CD4-positive, alpha-beta memory T cell (primary cell): ENCODE measurements at regions of chr17 and their contacts with region 1.

Region 1: DNA sequence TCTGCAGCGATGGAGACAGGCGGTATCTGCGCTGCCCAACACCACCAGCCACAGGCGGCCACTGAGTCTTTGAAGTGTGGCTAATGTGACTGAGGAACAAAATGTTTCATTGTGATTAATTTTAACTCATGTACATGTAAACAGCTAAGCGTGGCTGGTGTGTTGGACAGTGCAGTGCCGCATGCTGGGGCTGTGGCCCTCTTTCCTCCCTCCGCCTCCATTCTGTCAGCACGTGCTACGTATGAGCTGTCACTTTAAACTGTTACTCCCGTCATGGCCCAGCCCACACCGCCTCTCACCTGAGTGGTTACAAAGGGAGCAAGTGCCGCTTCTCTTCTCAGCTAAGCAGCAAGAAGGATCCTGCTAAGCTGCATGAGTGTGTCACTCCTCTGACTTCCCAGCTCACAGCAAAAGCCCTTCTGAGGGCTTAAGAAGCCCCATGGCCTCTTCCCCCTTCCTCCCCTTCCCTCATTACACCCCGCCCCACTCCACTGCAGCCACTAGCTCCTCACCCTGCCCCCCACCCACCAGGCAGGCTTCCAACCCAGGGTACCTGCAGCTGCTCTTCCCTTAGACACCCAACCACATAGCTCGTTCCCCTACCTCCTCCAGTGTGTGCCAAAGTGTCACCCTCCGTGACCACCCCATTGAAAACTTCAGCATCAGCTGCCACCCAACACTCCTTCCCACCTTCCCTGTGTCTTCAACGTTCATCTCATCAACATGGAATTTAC is 15.0 kb downstream of the HASPIN start:
- DNase-seq: peak; percentile 45 to 71 (median 52)
- H3K4me3 ChIP-seq: no peak overlapping the region
- H3K4me3 Mint-ChIP-seq: peak overlapping the region; percentile 21 to 70 (median 58)
- H3K27ac ChIP-seq: no peak overlapping the region
- H3K27ac Mint-ChIP-seq: peak overlapping the region; percentile 67 to 88 (median 81)
- H3K4me1 ChIP-seq: peaks cover 39% of the 10 kb centered on the region
- H3K4me1 Mint-ChIP-seq: peaks cover 21 to 39% (median 30%) of the 10 kb centered on the region in 4 donors
- H3K27me3 ChIP-seq: no peaks in the 10 kb centered on the region
- H3K27me3 Mint-ChIP-seq: no peaks in the 10 kb centered on the region

Region 2: GRCh38 chr17:3668279-3669085 is 70.2 kb before region 1 on chr17 and contains the starts of genes EMC6 and TAX1BP3:
- CTCF ChIA-PET with region 1: no interaction called
- POLR2A ChIA-PET with region 1: no interaction called
- intact Hi-C with region 1: no loop called
- DNase-seq: peak; percentile 97 to 100 (median 99)
- H3K4me3 ChIP-seq: peak within 1 kb of the TSS; percentile 76 to 83
- H3K4me3 Mint-ChIP-seq: peak within 1 kb of the TSS; percentile 88 to 96 (median 92)
- H3K27ac ChIP-seq: peak within 1 kb of the TSS; percentile 80
- H3K27ac Mint-ChIP-seq: peak within 1 kb of the TSS; percentile 84 to 95 (median 90)
- H3K4me1 ChIP-seq: peaks cover 23% of the 10 kb centered on the region
- H3K4me1 Mint-ChIP-seq: peaks cover 18 to 30% (median 19%) of the 10 kb centered on the region in 4 donors
- H3K27me3 ChIP-seq: no peaks in the 10 kb centered on the region
- H3K27me3 Mint-ChIP-seq: no peaks in the 10 kb centered on the region
- total RNA-seq, gene EMC6: 27.8 to 29.4 TPM
- total RNA-seq, gene TAX1BP3: 12.7 to 13.2 TPM

Region 3: GRCh38 chr17:3683054-3683511 is 55.6 kb before region 1 on chr17:
- CTCF ChIA-PET with region 1: interaction called, 6 read pairs
- POLR2A ChIA-PET with region 1: interaction called, 3 read pairs
- intact Hi-C with region 1: loop called (anchors 2 kb)
- DNase-seq: peak in 4 of 5 donors; percentile 55 to 62 (median 58)
- H3K4me3 ChIP-seq: no peak overlapping the region
- H3K4me3 Mint-ChIP-seq: peak overlapping the region in 1 of 8 donors; percentile 21
- H3K27ac ChIP-seq: no peak overlapping the region
- H3K27ac Mint-ChIP-seq: peak overlapping the region in 2 of 7 donors; percentile 65 to 70
- H3K4me1 ChIP-seq: peaks cover 9% of the 10 kb centered on the region
- H3K4me1 Mint-ChIP-seq: peaks cover 6 to 25% (median 7%) of the 10 kb centered on the region in 4 donors
- H3K27me3 ChIP-seq: no peaks in the 10 kb centered on the region
- H3K27me3 Mint-ChIP-seq: no peaks in the 10 kb centered on the region

Region 4: GRCh38 chr17:3754458-3755334 is 16.0 kb after region 1 on chr17:
- CTCF ChIA-PET with region 1: interaction called, 108 read pairs
- POLR2A ChIA-PET with region 1: interaction called, 22 read pairs
- intact Hi-C with region 1: no loop called
- DNase-seq: peak; percentile 78 to 87 (median 80)
- H3K4me3 ChIP-seq: peak overlapping the region in 1 of 2 donors; percentile 51
- H3K4me3 Mint-ChIP-seq: peak overlapping the region in 5 of 8 donors; percentile 44 to 75 (median 64)
- H3K27ac ChIP-seq: peak overlapping the region; percentile 60
- H3K27ac Mint-ChIP-seq: peak overlapping the region; percentile 36 to 85 (median 68)
- H3K4me1 ChIP-seq: peaks cover 33% of the 10 kb centered on the region
- H3K4me1 Mint-ChIP-seq: peaks cover 23 to 54% (median 36%) of the 10 kb centered on the region in 4 donors
- H3K27me3 ChIP-seq: no peaks in the 10 kb centered on the region
- H3K27me3 Mint-ChIP-seq: no peaks in the 10 kb centered on the region

Region 5: DNA sequence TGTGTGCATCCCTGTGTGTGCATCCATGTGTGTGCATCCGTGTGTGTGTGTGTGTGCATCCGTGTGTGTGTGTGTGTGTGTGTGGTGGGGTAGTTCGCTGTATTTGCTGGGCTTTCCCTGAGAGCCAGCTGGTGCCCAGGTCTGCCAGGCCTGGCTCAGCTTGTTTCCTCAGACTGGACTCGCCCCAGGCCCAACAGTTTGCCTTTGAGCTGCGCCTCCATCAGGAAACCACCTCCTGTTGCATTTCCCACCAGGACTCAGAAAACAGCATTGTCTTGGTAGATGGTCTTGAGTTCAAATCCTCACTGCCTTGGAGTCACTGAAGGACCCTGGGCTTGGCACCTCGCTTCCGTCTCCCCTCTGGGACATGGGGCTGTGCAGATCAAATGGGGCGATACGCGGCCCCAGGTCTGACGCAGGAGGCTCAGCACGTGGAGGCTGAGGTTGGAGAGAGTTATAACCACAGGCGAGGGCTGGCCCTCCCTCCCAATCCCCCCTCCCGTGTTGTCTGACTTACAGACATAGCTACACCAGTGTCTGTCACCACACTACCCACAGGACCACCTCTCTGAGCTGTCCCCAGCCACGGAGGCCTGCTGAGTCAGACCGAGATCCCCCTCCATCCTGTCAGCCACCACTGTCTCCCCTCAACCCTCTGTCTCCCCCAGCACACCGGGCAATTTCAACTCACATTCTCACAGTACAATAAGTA is 57.5 kb after region 1 on chr17:
- CTCF ChIA-PET with region 1: interaction called, 19 read pairs
- POLR2A ChIA-PET with region 1: no interaction called
- intact Hi-C with region 1: no loop called
- DNase-seq: peak; percentile 59 to 91 (median 70)
- H3K4me3 ChIP-seq: no peak overlapping the region
- H3K4me3 Mint-ChIP-seq: peak overlapping the region in 7 of 8 donors; percentile 42 to 73 (median 52)
- H3K27ac ChIP-seq: no peak overlapping the region
- H3K27ac Mint-ChIP-seq: peak overlapping the region; percentile 55 to 92 (median 84)
- H3K4me1 ChIP-seq: peaks cover 21% of the 10 kb centered on the region
- H3K4me1 Mint-ChIP-seq: peaks cover 10 to 27% (median 22%) of the 10 kb centered on the region in 4 donors
- H3K27me3 ChIP-seq: no peaks in the 10 kb centered on the region
- H3K27me3 Mint-ChIP-seq: no peaks in the 10 kb centered on the region

Region 6: DNA sequence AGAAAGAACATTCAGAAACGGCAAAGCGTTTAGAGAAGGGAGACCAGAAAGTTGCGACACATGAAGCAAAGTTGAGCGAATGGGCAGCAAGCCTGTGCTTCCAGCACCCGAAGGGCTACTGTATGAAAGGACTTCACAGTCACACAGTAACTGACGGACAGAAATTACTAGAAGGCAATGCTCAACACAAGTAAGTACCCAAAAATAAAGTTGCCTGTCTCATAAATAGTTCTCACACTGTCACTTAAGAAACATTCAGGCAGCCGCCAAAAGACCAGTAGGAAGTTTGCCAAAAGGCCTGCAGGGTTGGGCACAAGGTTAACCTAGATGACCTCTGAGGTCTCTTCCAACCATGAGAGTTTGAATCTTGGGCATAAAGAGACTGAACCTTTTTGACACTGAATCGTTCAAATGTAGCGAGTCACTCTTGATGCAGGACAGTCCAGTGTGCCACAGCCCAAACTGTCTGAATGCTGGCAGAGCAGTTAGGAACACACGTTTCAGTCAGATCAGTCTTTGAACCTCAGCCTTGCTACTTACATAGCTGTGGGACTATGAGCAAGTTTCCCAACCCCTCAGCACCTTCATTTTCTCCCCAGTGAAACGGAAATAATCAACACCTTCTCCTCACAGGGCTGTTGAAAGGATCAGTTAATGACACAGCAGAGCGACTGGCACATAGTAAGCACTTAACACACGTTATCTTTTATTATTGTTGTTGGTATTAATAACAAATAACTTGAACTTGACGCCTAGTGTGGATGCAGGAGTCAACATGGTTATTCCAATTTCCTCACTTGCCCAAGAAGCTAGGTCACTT is 96.9 kb after region 1 on chr17:
- CTCF ChIA-PET with region 1: interaction called, 333 read pairs
- POLR2A ChIA-PET with region 1: interaction called, 3 read pairs
- intact Hi-C with region 1: no loop called
- DNase-seq: no peak
- H3K4me3 ChIP-seq: no peak overlapping the region
- H3K4me3 Mint-ChIP-seq: no peak overlapping the region
- H3K27ac ChIP-seq: no peak overlapping the region
- H3K27ac Mint-ChIP-seq: peak overlapping the region in 1 of 7 donors; percentile 56
- H3K4me1 ChIP-seq: no peaks in the 10 kb centered on the region
- H3K4me1 Mint-ChIP-seq: peaks cover 13 to 27% (median 21%) of the 10 kb centered on the region in 4 donors
- H3K27me3 ChIP-seq: no peaks in the 10 kb centered on the region
- H3K27me3 Mint-ChIP-seq: no peaks in the 10 kb centered on the region

Region 7: GRCh38 chr17:3913531-3914311 is 175.0 kb after region 1 on chr17:
- CTCF ChIA-PET with region 1: interaction called, 17 read pairs
- POLR2A ChIA-PET with region 1: no interaction called
- intact Hi-C with region 1: loop called (anchors 1 kb)
- DNase-seq: peak; percentile 70 to 81 (median 74)
- H3K4me3 ChIP-seq: no peak overlapping the region
- H3K4me3 Mint-ChIP-seq: peak overlapping the region in 3 of 8 donors; percentile 10 to 40 (median 29)
- H3K27ac ChIP-seq: no peak overlapping the region
- H3K27ac Mint-ChIP-seq: peak overlapping the region; percentile 64 to 88 (median 77)
- H3K4me1 ChIP-seq: peaks cover 46% of the 10 kb centered on the region
- H3K4me1 Mint-ChIP-seq: peaks cover 15 to 62% (median 39%) of the 10 kb centered on the region in 4 donors
- H3K27me3 ChIP-seq: no peaks in the 10 kb centered on the region
- H3K27me3 Mint-ChIP-seq: no peaks in the 10 kb centered on the region